ENCODE measurements at regions of chr13 and their contacts with region 1.

Region 1: DNA sequence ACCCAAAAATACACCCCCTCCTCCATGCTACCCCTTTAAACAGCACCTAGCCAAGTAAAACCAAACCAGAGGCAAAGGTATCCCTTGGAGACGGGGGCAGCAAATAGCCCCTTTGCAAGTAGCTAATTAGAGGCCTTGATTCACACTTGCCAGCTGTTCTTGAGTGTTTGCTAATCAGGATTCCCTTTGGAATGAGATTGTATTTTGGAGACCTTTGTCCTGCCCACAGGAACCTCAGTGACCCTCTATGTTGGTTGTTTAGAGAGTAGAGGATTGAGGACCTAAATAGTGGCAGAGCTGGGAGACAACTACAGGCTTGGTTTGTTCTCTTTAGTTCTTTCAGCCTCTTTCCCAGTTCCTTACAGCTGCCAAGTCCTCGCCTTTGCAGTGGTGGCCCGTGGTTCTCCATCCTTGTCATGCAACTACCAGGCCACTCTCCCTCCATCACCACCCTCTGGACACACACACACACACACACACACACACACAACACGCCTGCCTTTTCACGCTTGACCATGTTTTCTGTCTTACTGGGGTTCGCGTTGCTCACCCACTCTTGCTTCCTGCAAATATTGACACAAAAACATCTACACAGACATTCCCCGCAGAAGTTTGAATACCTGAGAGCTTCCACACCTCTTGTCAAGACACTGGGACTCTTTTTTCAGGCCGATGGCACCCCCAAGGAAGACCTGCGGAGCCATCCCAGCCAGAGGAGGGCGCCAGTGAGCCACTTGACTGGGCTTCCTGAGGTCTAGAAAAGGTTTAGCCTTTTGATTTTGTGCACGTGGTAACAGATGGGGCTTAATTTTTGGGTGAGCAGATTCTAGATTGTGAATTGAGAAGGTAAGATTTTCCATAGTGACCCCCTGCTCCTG is 80.0 kb upstream of the GPR183 start:
- DNase-seq: peak; percentile 94
- ATAC-seq: peak; percentile 62
- H3K4me3 Mint-ChIP-seq: no peak overlapping the region
- H3K27ac Mint-ChIP-seq: peak overlapping the region; percentile 76
- H3K4me1 Mint-ChIP-seq: peaks cover 63% of the 10 kb centered on the region
- H3K27me3 Mint-ChIP-seq: no peaks in the 10 kb centered on the region

Region 2: GRCh38 chr13:99296398-99296797 is 90.8 kb before region 1 on chr13:
- CTCF ChIA-PET with region 1: interaction called, 7 read pairs
- POLR2A ChIA-PET with region 1: interaction called, 5 read pairs
- intact Hi-C with region 1: loop called in 1 of 2 experiments (anchors 1 kb)
- DNase-seq: no peak
- ATAC-seq: peak; percentile 54
- H3K4me3 Mint-ChIP-seq: peak overlapping the region; percentile 58
- H3K27ac Mint-ChIP-seq: peak overlapping the region; percentile 96
- H3K4me1 Mint-ChIP-seq: peaks cover 86% of the 10 kb centered on the region
- H3K27me3 Mint-ChIP-seq: no peaks in the 10 kb centered on the region

Region 3: GRCh38 chr13:99374169-99374991 is 12.8 kb before region 1 on chr13:
- CTCF ChIA-PET with region 1: interaction called, 25 read pairs
- POLR2A ChIA-PET with region 1: no interaction called
- intact Hi-C with region 1: loop called in 1 of 2 experiments (anchors 2 kb)
- DNase-seq: no peak
- ATAC-seq: no peak
- H3K4me3 Mint-ChIP-seq: no peak overlapping the region
- H3K27ac Mint-ChIP-seq: peak overlapping the region; percentile 53
- H3K4me1 Mint-ChIP-seq: peaks cover 84% of the 10 kb centered on the region
- H3K27me3 Mint-ChIP-seq: no peaks in the 10 kb centered on the region

Region 4: DNA sequence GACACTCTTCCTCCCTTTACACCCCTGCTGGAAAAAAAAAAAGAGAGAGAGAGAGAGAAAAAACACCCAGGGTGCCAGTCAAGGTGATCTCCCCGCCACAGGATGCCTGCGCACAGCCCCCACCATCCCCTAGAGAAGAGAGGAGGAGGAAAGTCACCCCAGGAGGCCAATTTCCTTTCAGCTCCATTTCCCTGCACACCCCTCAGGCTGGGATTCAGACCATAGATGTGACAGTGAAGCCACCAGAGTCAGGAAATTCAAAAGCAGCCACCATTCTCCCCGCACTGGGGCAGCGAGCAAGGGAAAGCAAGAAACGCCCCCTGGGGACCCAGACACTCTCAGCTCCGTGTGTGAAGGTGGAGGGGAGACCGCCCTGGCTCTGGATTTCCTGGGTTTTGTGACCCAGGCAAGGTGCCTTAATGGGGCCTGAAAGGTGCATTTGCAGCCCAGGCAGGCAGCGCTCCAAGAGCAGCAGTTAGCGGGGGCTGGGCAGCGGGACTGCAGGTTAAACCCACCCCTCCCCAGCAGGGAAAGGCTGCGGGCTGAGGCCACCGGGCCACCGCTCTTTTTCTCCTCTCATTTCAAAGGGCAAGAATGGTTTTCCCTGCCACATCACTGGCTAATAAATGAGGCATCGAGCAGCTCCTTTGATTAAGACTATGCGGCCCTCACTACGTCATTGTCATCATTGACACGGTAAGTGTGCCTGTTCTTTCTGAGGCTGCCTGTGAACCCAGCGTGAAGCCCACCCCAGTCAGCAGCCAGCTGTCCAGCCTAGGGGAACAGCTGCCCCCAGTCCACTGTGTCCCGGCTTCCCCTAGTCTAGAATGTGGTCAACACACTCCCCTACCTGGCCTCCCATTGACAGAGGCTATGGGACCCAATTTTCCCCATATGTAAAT is 30.3 kb after region 1 on chr13:
- CTCF ChIA-PET with region 1: interaction called, 16 read pairs
- POLR2A ChIA-PET with region 1: interaction called, 5 read pairs
- intact Hi-C with region 1: loop called (anchors 2 to 5 kb)
- DNase-seq: peak; percentile 57
- ATAC-seq: peak; percentile 2
- H3K4me3 Mint-ChIP-seq: no peak overlapping the region
- H3K27ac Mint-ChIP-seq: no peak overlapping the region
- H3K4me1 Mint-ChIP-seq: peaks cover 62% of the 10 kb centered on the region
- H3K27me3 Mint-ChIP-seq: no peaks in the 10 kb centered on the region

Measured in activated CD4-positive, alpha-beta T cell treated with anti-CD3 and anti-CD28 coated beads for 36 hours (primary cell).